HAP-1 (cell line): ENCODE measurements at regions of chr19 and their contacts with region 1.

Region 1: GRCh38 chr19:33176670-33177416 is 17.3 kb upstream of the LRP3 start:
- DNase-seq: peak; percentile 96 to 99
- H3K4me3 ChIP-seq: peak overlapping the region; percentile 73
- H3K4me1 ChIP-seq: peaks cover 15% of the 10 kb centered on the region
- H3K27me3 ChIP-seq: no peaks in the 10 kb centered on the region

Region 2: GRCh38 chr19:32674959-32675719 is 501.7 kb before region 1 on chr19 and contains the start of gene ANKRD27:
- in situ Hi-C with region 1: loop called (anchors 25 kb)
- DNase-seq: peak; percentile 93 to 98
- H3K4me3 ChIP-seq: peak within 1 kb of the TSS; percentile 87
- H3K4me1 ChIP-seq: peaks cover 19% of the 10 kb centered on the region
- H3K27me3 ChIP-seq: no peaks in the 10 kb centered on the region

Region 3: DNA sequence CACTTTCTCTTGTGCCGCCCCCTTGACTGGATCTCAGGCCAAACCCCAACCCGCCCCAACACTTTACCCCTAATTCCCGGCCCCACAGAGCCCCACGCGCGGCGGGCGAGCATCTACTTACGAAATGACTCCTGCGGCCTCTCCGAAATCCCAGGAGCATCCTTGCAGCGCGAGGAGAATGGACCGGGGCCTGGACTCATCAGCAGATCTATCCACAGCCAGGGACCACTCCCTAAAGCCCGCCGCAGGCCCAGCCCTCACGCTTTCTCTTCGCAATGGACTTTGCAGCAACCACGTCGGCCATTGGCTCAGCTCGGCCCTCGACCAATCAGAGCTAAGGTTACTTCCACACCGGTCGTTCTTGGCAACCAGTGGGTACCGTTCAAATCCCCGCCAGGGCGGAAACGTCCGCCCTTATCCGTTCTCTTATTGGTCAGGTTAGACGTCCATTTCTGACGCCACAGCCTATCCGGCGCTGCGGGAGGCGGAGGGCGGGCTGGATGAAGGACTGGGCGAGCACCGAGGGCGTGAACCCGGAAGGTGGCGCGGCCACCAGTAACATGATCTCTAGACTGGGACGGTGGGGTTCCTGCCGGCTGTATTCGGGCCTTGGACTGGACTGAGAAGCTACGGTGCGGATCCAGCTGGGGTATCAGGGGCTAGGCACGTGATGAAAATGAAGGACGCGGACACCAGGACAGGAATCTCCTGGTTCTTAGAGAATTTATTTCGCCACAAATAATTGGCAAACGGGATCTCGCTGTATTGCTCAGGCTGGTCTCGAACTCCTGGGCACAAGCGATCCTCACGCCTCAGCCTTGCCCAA is 204.9 kb before region 1 on chr19 and contains the starts of genes CEP89 and FAAP24:
- in situ Hi-C with region 1: loop called (anchors 5 kb)
- DNase-seq: peak; percentile 97 to 98
- H3K4me3 ChIP-seq: peak within 1 kb of the TSS; percentile 87
- H3K4me1 ChIP-seq: peaks cover 4% of the 10 kb centered on the region; the same call in 1 of the 2 replicates
- H3K27me3 ChIP-seq: no peaks in the 10 kb centered on the region

Region 4: GRCh38 chr19:33147538-33147937 is 29.3 kb before region 1 on chr19:
- in situ Hi-C with region 1: loop called (anchors 5 kb)
- DNase-seq: peak in 1 of 2 experiments; percentile 41
- H3K4me3 ChIP-seq: no peak overlapping the region
- H3K4me1 ChIP-seq: peaks cover 6% of the 10 kb centered on the region; the same call in 1 of the 2 replicates
- H3K27me3 ChIP-seq: no peaks in the 10 kb centered on the region